ENCODE measurements at regions of chr5 and their contacts with region 1.

Region 1: GRCh38 chr5:41598011-41598410 is 87.6 kb upstream of the PLCXD3 start:
- DNase-seq: no peak
- ATAC-seq: no peak
- H3K4me3 ChIP-seq: no peak overlapping the region
- H3K27ac ChIP-seq: no peak overlapping the region
- H3K4me1 ChIP-seq: no peaks in the 10 kb centered on the region
- H3K27me3 ChIP-seq: no peaks in the 10 kb centered on the region
- CTCF ChIP-seq: no peak
- POLR2A ChIP-seq: no peak

Region 2: GRCh38 chr5:41587668-41588067 is 10.3 kb before region 1 on chr5:
- intact Hi-C with region 1: loop called in 1 of 10 experiments (anchors 2 kb)
- DNase-seq: peak in 1 of 5 donors; percentile 16
- ATAC-seq: no peak
- H3K4me3 ChIP-seq: no peak overlapping the region
- H3K27ac ChIP-seq: no peak overlapping the region
- H3K4me1 ChIP-seq: no peaks in the 10 kb centered on the region
- H3K27me3 ChIP-seq: no peaks in the 10 kb centered on the region
- CTCF ChIP-seq: no peak
- POLR2A ChIP-seq: no peak